Heart left ventricle (tissue), 16 donors: ENCODE measurements at regions of chr11 and their contacts with region 1.

Region 1: GRCh38 chr11:44785856-44786606 is 59.3 kb downstream of the TSPAN18 start:
- DNase-seq: no peak
- ATAC-seq: peak in 3 of 4 donors; percentile 26 to 42 (median 33)
- H3K4me3 ChIP-seq: no peak overlapping the region
- H3K27ac ChIP-seq: peak overlapping the region in 3 of 12 donors; percentile 15 to 17 (median 17)
- H3K4me1 ChIP-seq: peaks cover 7 to 76% (median 39%) of the 10 kb centered on the region in 12 donors
- H3K27me3 ChIP-seq: no peaks in the 10 kb centered on the region
- CTCF ChIP-seq: peak in 3 of 12 donors; percentile 12 to 32 (median 20)
- POLR2A ChIP-seq: no peak

Region 2: DNA sequence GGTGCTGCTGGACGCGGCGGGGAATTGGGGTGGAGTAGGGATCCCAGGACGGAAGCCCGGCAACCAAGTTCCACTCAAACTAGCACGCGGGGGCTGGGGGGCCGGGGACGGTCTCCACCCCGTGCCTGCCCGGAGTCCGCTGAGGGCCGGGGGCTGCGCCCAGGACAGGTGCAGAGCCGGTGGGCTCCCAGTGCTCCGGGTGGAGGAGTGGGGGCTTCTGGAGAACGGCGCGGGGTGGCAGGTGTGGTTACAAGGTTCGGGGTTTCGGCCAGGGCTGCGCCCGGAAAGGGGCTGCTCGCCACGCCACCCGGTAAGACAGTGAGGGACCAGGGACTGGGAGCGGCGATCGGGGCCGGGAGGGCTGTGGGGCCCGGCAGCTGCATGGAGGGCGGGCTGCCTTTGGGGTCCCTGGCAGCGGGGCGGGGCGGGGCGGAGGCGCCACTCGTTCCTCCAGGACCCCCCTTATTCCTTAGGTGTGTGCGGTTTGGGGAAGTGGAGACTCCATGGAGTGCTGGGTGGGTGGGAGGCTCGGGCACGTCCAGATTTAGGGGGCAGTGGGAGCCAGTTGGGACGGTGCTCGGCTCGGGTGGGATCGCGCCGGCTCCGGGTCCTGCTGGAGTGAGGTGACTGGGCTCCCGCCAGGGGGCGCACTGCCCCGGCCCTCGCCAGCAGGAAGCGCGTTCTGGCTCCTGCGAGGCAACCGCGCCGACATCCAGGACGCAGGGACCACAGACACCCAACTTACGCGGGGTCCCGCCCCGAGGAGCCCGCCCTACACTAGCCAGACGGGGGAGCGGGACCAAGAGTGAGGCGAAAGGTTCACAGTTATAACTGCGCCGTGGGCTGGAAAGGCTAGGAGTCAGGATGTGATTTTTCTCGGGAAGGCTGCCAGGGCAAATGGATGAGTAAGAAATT is 58.4 kb before region 1 on chr11:
- intact Hi-C with region 1: no loop called
- DNase-seq: peak; percentile 88 to 92 (median 89)
- ATAC-seq: peak; percentile 82 to 86 (median 84)
- H3K4me3 ChIP-seq: peak overlapping the region; percentile 76 to 98 (median 86)
- H3K27ac ChIP-seq: peak overlapping the region; percentile 74 to 96 (median 88)
- H3K4me1 ChIP-seq: peaks cover 0 to 70% (median 48%) of the 10 kb centered on the region in 12 donors
- H3K27me3 ChIP-seq: peaks cover 0 to 26% (median 0%) of the 10 kb centered on the region in 9 donors
- CTCF ChIP-seq: peak; percentile 93 to 98 (median 96)
- POLR2A ChIP-seq: no peak

Region 3: DNA sequence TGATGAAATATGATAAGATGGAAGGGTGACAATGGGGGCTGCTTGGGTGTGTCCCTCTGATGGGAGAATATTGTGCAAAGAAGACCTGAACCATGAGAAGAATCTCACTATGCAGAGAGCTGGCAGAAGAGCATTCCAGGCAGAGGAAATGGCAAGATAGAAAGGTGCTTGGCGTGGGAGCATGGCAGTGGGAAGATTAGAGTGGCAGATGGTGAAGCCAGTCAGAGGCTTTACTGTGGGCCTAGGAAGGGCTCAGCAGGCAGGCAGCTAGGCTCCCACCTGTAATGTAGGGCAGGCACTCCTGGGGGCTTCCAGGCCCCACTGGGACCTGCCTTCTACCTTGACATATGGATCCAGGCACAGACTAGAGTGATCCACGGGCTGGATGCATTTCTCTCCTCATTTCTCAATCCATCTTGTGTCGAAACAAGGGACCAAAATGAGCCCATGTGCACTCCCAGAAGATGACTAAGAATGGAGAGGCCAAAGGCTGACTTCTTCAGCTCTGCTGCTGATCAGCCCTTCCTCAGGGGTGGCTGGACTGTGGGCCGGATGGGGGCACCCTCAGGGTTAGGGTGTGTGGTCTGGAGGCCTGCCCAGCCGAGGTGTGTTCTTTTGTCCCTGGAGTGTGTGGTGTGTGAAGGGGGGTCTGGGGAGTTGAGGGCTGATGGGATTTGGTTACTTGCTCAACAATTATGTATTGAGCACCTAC is 29.0 kb after region 1 on chr11:
- intact Hi-C with region 1: loop called in 1 of 10 experiments (anchors 5 kb)
- DNase-seq: no peak
- ATAC-seq: peak in 1 of 4 donors; percentile 15
- H3K4me3 ChIP-seq: no peak overlapping the region
- H3K27ac ChIP-seq: peak overlapping the region in 7 of 12 donors; percentile 10 to 47 (median 36)
- H3K4me1 ChIP-seq: peaks cover 6 to 96% (median 74%) of the 10 kb centered on the region in 12 donors
- H3K27me3 ChIP-seq: no peaks in the 10 kb centered on the region
- CTCF ChIP-seq: no peak
- POLR2A ChIP-seq: no peak

Region 4: GRCh38 chr11:44883277-44883676 is 97.2 kb after region 1 on chr11:
- intact Hi-C with region 1: loop called in 1 of 10 experiments (anchors 5 kb)
- DNase-seq: no peak
- ATAC-seq: no peak
- H3K4me3 ChIP-seq: no peak overlapping the region
- H3K27ac ChIP-seq: no peak overlapping the region
- H3K4me1 ChIP-seq: peaks cover 0 to 34% (median 19%) of the 10 kb centered on the region in 12 donors
- H3K27me3 ChIP-seq: no peaks in the 10 kb centered on the region
- CTCF ChIP-seq: no peak
- POLR2A ChIP-seq: no peak